ENCODE measurements at regions of chr17 and their contacts with region 1.

Region 1: DNA sequence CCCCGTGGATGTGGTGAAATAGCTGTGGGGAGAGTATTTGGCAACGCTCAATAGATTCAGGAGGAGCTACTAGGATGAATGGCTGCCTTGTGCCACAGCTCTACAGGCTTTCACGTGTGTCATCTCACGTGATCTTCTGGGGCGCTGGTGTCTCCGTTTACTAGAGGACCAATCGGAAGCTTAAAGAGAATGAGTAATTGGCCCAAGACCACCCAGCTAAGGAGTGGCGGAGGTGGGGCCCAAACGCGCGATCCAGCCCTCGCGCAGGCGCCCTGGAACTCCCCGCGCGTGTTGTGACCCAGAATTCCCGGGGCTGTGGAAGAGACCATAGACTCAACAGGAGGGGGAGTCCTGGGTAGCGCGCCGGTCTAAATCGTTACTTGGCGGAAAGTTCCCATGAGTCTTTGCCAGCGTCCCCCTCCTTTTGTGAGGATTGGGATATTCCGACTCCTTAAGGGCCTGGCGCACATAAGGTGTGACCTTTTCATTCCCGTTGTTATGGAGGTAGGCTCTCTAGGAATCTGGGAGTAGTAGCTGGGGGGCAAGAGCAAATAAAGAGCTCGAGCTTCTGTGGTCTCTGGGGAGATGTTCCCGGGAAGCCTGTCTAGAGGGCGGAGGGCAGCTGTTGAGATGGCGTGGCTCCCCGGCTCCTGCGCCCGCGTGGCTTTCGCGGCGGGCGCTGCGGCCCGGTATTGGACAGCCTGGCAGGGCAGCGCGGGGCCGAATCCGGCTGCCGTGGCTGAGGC is 23.4 kb downstream of the TRPV2 start:
- DNase-seq: peak; percentile 90 to 98
- ATAC-seq: peak; percentile 79 to 90 (median 86)
- H3K4me3 ChIP-seq: peak overlapping the region; percentile 90
- H3K4me3 Mint-ChIP-seq: peak overlapping the region; percentile 100
- H3K27ac ChIP-seq: peak overlapping the region; percentile 94
- H3K27ac Mint-ChIP-seq: peak overlapping the region; percentile 96 to 98
- H3K4me1 ChIP-seq: peaks cover 27% of the 10 kb centered on the region
- H3K4me1 Mint-ChIP-seq: peaks cover 48 to 64% of the 10 kb centered on the region in 2 donors
- H3K27me3 ChIP-seq: no peaks in the 10 kb centered on the region
- H3K27me3 Mint-ChIP-seq: no peaks in the 10 kb centered on the region
- CTCF ChIP-seq: no peak

Region 2: GRCh38 chr17:16258901-16259300 is 179.8 kb before region 1 on chr17:
- intact Hi-C with region 1: no loop called
- DNase-seq: no peak
- ATAC-seq: no peak
- H3K4me3 ChIP-seq: no peak overlapping the region
- H3K4me3 Mint-ChIP-seq: no peak overlapping the region
- H3K27ac ChIP-seq: no peak overlapping the region
- H3K27ac Mint-ChIP-seq: no peak overlapping the region
- H3K4me1 ChIP-seq: no peaks in the 10 kb centered on the region
- H3K4me1 Mint-ChIP-seq: peaks cover 0 to 9% of the 10 kb centered on the region in 2 donors
- H3K27me3 ChIP-seq: no peaks in the 10 kb centered on the region
- H3K27me3 Mint-ChIP-seq: no peaks in the 10 kb centered on the region
- CTCF ChIP-seq: no peak

Region 3: DNA sequence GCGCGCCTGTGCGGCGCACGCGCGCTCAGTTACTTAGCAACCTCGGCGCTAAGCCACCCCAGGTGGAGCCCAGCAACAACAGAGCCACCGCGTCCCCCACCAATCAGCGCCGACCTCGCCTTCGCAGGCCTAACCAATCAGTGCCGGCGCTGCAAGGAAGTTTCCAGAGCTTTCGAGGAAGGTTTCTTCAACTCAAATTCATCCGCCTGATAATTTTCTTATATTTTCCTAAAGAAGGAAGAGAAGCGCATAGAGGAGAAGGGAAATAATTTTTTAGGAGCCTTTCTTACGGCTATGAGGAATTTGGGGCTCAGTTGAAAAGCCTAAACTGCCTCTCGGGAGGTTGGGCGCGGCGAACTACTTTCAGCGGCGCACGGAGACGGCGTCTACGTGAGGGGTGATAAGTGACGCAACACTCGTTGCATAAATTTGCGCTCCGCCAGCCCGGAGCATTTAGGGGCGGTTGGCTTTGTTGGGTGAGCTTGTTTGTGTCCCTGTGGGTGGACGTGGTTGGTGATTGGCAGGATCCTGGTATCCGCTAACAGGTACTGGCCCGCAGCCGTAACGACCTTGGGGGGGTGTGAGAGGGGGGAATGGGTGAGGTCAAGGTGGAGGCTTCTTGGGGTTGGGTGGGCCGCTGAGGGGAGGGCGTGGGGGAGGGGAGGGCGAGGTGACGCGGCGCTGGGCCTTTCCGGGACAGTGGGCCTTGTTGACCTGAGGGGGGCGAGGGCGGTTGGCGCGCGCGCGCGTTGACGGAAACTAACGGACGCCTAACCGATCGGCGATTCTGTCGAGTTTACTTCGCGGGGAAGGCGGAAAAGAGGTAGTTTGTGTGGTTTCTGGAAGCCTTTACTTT is 57.9 kb before region 1 on chr17 and contains the start of gene UBB:
- intact Hi-C with region 1: loop called (anchors 1 kb)
- DNase-seq: peak; percentile 91 to 98
- ATAC-seq: peak; percentile 86 to 95 (median 87)
- H3K4me3 ChIP-seq: peak within 1 kb of the TSS; percentile 58
- H3K4me3 Mint-ChIP-seq: peak within 1 kb of the TSS; percentile 99
- H3K27ac ChIP-seq: peak within 1 kb of the TSS; percentile 90
- H3K27ac Mint-ChIP-seq: peak within 1 kb of the TSS; percentile 99 to 100
- H3K4me1 ChIP-seq: peaks cover 22% of the 10 kb centered on the region
- H3K4me1 Mint-ChIP-seq: peaks cover 40 to 45% of the 10 kb centered on the region in 2 donors
- H3K27me3 ChIP-seq: no peaks in the 10 kb centered on the region
- H3K27me3 Mint-ChIP-seq: no peaks in the 10 kb centered on the region
- CTCF ChIP-seq: no peak
- total RNA-seq, gene UBB: 1,492 to 1,665 (median 1,530) TPM

Region 4: GRCh38 chr17:16415031-16415924 is 23.5 kb before region 1 on chr17 and contains the start of gene TRPV2:
- intact Hi-C with region 1: loop called (anchors 1 kb)
- DNase-seq: peak; percentile 44 to 74
- ATAC-seq: peak; percentile 39 to 56 (median 53)
- H3K4me3 ChIP-seq: peak within 1 kb of the TSS; percentile 62
- H3K4me3 Mint-ChIP-seq: peak within 1 kb of the TSS; percentile 98
- H3K27ac ChIP-seq: peak within 1 kb of the TSS; percentile 93
- H3K27ac Mint-ChIP-seq: peak within 1 kb of the TSS; percentile 98 to 100
- H3K4me1 ChIP-seq: peaks cover 50% of the 10 kb centered on the region
- H3K4me1 Mint-ChIP-seq: peaks cover 45 to 57% of the 10 kb centered on the region in 2 donors
- H3K27me3 ChIP-seq: no peaks in the 10 kb centered on the region
- H3K27me3 Mint-ChIP-seq: no peaks in the 10 kb centered on the region
- CTCF ChIP-seq: peak; percentile 50
- total RNA-seq, gene TRPV2: 138 to 163 (median 147) TPM

Region 5: GRCh38 chr17:16491703-16492612 is 53.2 kb after region 1 on chr17 and contains the start of gene LRRC75A:
- intact Hi-C with region 1: no loop called
- DNase-seq: peak; percentile 37 to 79
- ATAC-seq: peak; percentile 91 to 93 (median 91)
- H3K4me3 ChIP-seq: peak within 1 kb of the TSS; percentile 36
- H3K4me3 Mint-ChIP-seq: peak within 1 kb of the TSS; percentile 84
- H3K27ac ChIP-seq: no peak within 1 kb of the TSS
- H3K27ac Mint-ChIP-seq: no peak within 1 kb of the TSS
- H3K4me1 ChIP-seq: peaks cover 13% of the 10 kb centered on the region
- H3K4me1 Mint-ChIP-seq: peaks cover 12 to 14% of the 10 kb centered on the region in 2 donors
- H3K27me3 ChIP-seq: peaks cover 3% of the 10 kb centered on the region
- H3K27me3 Mint-ChIP-seq: peaks cover 0 to 18% of the 10 kb centered on the region in 2 donors
- CTCF ChIP-seq: no peak
- total RNA-seq, gene LRRC75A: 2.6 to 3.0 (median 3.0) TPM

Region 6: DNA sequence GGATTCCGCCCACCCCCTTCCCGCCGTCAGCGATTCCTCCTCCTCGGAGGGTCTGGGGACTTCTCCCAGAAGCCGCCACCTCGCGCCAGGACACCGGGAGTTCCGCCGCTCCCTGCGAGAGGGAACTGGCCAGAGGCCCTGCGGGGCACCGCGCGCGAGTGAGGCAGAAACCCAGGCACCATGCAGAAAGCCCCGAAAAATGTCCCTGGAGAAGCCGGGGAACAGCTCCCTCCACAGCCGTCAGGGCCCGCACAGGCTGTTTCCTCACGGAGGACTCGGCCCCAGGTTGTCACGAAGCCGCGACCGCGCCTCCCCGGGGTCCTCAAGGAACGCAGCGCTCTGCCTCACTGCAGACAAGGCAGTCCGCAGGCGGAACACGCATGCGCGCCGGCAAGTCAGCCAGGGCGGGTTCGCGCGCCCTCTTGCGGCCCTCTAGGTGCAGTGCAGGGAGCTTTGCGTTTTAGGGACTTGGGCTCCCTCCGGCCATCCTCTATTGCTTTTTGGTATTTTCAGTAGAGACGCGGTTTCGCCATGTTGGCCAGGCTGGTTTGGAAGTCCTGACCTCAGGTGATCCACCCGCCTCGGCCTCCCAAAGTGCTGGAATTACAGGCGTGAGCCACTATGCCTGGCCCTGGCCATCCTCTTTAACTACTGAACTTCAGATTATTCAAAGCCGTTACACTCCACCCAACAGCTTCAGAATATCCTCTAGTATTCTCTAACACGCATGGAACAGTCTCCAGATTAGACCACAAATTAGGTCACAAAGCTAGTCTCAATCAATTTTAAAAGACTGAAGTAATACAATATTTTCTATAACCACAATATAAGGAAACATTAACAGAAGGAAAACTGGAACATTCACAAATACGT is 150.6 kb after region 1 on chr17:
- intact Hi-C with region 1: loop called (anchors 5 kb)
- DNase-seq: peak; percentile 91 to 96
- ATAC-seq: peak; percentile 98
- H3K4me3 ChIP-seq: peak overlapping the region; percentile 47
- H3K4me3 Mint-ChIP-seq: peak overlapping the region; percentile 79
- H3K27ac ChIP-seq: no peak overlapping the region
- H3K27ac Mint-ChIP-seq: no peak overlapping the region
- H3K4me1 ChIP-seq: peaks cover 14% of the 10 kb centered on the region
- H3K4me1 Mint-ChIP-seq: peaks cover 3 to 11% of the 10 kb centered on the region in 2 donors
- H3K27me3 ChIP-seq: no peaks in the 10 kb centered on the region
- H3K27me3 Mint-ChIP-seq: peaks cover 24 to 75% of the 10 kb centered on the region in 2 donors
- CTCF ChIP-seq: peak; percentile 97